GM12878 (cell line): ENCODE measurements at regions of chr2 and their contacts with region 1.

Region 1: GRCh38 chr2:201451292-201452057 is at the starts of genes STRADB and TRAK2:
- DNase-seq: peak; percentile 80
- ATAC-seq: peak; percentile 97
- H3K4me3 ChIP-seq: peak within 1 kb of the TSS; percentile 96
- H3K27ac ChIP-seq: peak within 1 kb of the TSS; percentile 85
- H3K4me1 ChIP-seq: peaks cover 22% of the 10 kb centered on the region
- H3K27me3 ChIP-seq: no peaks in the 10 kb centered on the region
- CTCF ChIP-seq: peak in 1 of 3 experiments; percentile 31; a peak in 2 of 6 replicates
- EP300 ChIP-seq: 0 out of 4 replicates have a peak, but pooled peaks of 1 of the 2 experiments have one; percentile 40
- POLR2A ChIP-seq: peak; percentile 95
- RAD21 ChIP-seq: 0 out of 2 replicates have a peak, but pooled peaks have one; percentile 3
- polyA plus RNA-seq, gene STRADB: 12.1 to 15.4 TPM
- polyA plus RNA-seq, gene TRAK2: 5.2 to 5.5 TPM

Region 2: DNA sequence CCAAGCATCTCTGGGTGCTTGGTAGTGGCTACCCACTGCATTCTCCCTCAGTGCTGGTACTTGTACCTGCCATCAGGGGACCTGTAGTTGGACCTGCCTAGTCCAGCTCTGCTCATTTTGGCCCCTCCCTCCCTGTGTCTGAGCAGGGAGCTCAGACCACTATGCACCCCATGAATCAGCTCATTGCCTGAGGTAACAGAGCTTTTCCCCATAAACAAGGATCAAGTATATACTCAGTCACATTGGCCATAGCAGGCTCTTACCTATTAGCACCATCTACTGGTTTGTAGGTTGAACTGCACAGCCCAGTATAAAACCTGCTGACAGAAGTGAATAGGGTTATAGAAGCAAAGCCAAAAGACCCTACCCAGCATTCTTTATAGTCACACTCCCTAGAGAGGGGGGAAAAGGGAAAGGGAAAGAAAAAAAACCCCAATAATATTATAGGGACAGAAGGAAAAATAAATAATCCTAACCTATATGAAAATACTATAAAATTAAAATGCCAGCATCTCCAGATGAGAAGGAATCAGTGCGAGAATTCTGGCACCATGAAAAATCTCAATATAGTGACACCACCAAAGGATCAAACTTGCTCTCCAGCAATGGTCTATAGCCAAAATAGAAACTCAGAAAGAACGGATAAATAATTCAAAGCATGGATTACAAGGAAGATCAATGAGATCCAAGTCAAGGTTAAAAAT is 87.5 kb before region 1 on chr2:
- CTCF ChIA-PET with region 1: no interaction called
- POLR2A ChIA-PET with region 1: no interaction called
- RAD21 ChIA-PET with region 1: no interaction called
- SMC1A ChIA-PET with region 1: no interaction called
- in situ Hi-C with region 1: no loop called
- intact Hi-C with region 1: no loop called
- DNase-seq: peak; percentile 30
- ATAC-seq: peak; percentile 94
- H3K4me3 ChIP-seq: no peak overlapping the region
- H3K27ac ChIP-seq: no peak overlapping the region
- H3K4me1 ChIP-seq: no peaks in the 10 kb centered on the region
- H3K27me3 ChIP-seq: no peaks in the 10 kb centered on the region
- CTCF ChIP-seq: peak; percentile 83 to 86 (median 86)
- EP300 ChIP-seq: no peak
- POLR2A ChIP-seq: no peak
- RAD21 ChIP-seq: peak; percentile 97

Region 3: GRCh38 chr2:201414099-201415023 is 37.1 kb before region 1 on chr2:
- CTCF ChIA-PET with region 1: interaction called, 6 read pairs
- POLR2A ChIA-PET with region 1: no interaction called
- RAD21 ChIA-PET with region 1: interaction called, 7 read pairs
- SMC1A ChIA-PET with region 1: interaction called, 12 read pairs
- in situ Hi-C with region 1: no loop called
- intact Hi-C with region 1: no loop called
- DNase-seq: peak; percentile 38
- ATAC-seq: peak; percentile 92
- H3K4me3 ChIP-seq: 0 out of 2 replicates have a peak overlapping the region, but pooled peaks have one; percentile 0
- H3K27ac ChIP-seq: peak overlapping the region; percentile 13; the same call in 1 of the 2 replicates
- H3K4me1 ChIP-seq: peaks cover 19% of the 10 kb centered on the region
- H3K27me3 ChIP-seq: no peaks in the 10 kb centered on the region
- CTCF ChIP-seq: no peak
- EP300 ChIP-seq: no peak
- POLR2A ChIP-seq: no peak
- RAD21 ChIP-seq: no peak

Region 4: GRCh38 chr2:201642579-201643215 is 191.2 kb after region 1 on chr2:
- CTCF ChIA-PET with region 1: interaction called, 3 read pairs
- POLR2A ChIA-PET with region 1: no interaction called
- RAD21 ChIA-PET with region 1: interaction called, 3 read pairs
- SMC1A ChIA-PET with region 1: no interaction called
- in situ Hi-C with region 1: no loop called
- intact Hi-C with region 1: loop called (anchors 5 kb)
- DNase-seq: peak; percentile 1
- ATAC-seq: peak; percentile 93
- H3K4me3 ChIP-seq: peak overlapping the region; percentile 94
- H3K27ac ChIP-seq: peak overlapping the region; percentile 85
- H3K4me1 ChIP-seq: no peaks in the 10 kb centered on the region
- H3K27me3 ChIP-seq: no peaks in the 10 kb centered on the region
- CTCF ChIP-seq: no peak
- EP300 ChIP-seq: 0 out of 4 replicates have a peak, but pooled peaks of 1 of the 2 experiments have one; percentile 17
- POLR2A ChIP-seq: peak; percentile 89
- RAD21 ChIP-seq: no peak